ENCODE measurements at regions of chr13 and their contacts with region 1.

Region 1: GRCh38 chr13:99656092-99656745 is 154.9 kb downstream of the TM9SF2 start:
- DNase-seq: peak; percentile 64 to 70
- ATAC-seq: peak; percentile 87 to 93 (median 88)
- H3K4me3 ChIP-seq: no peak overlapping the region
- H3K27ac ChIP-seq: no peak overlapping the region
- H3K4me1 ChIP-seq: no peaks in the 10 kb centered on the region
- H3K27me3 ChIP-seq: no peaks in the 10 kb centered on the region
- CTCF ChIP-seq: peak; percentile 87

Region 2: DNA sequence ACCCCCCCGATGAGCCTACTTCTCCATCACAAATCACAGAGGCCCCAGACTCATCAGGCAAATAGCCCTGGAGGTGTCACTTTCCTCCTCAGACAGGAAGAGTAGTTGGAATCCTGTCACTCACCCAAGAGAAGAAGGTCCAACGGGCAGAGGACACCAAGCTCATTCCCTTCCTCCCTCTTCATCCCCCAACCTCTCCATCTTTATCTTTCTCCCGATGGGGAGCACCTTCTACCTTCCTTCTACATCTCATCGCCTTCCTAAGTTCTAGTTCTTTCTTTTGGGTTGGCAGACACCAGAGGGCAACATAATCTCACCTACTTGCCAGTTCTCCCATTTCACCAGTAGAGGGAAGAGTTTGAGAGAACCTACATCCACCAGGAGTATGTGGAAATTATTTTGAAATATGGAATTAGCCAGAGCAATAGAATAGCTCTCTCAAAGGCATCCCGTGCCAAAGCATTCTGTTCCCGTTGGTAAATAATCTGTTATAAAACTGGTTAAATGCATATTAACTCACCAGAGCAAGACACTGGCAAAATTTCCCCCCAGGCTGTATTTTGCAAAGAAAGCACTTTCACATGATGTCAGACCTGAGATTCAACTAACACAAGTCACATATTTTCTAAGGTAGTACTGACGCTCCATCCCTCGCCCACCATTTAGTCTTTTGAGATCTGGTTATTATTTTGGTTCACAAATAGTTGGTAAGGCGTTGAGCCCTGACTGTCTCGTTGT is 260.3 kb after region 1 on chr13:
- intact Hi-C with region 1: loop called in 1 of 2 experiments (anchors 10 kb)
- DNase-seq: no peak
- ATAC-seq: peak in 2 of 4 donors; percentile 49 to 67
- H3K4me3 ChIP-seq: no peak overlapping the region
- H3K27ac ChIP-seq: no peak overlapping the region
- H3K4me1 ChIP-seq: no peaks in the 10 kb centered on the region
- H3K27me3 ChIP-seq: peaks cover 0 to 62% (median 5%) of the 10 kb centered on the region in 3 donors
- CTCF ChIP-seq: peak; percentile 67

Region 3: GRCh38 chr13:100235311-100235901 is 579.2 kb after region 1 on chr13:
- intact Hi-C with region 1: loop called (anchors 2 to 5 kb)
- DNase-seq: no peak
- ATAC-seq: peak in 1 of 4 donors; percentile 58
- H3K4me3 ChIP-seq: no peak overlapping the region
- H3K27ac ChIP-seq: no peak overlapping the region
- H3K4me1 ChIP-seq: no peaks in the 10 kb centered on the region
- H3K27me3 ChIP-seq: no peaks in the 10 kb centered on the region
- CTCF ChIP-seq: peak; percentile 55

Measured in psoas muscle (tissue), 8 donors.